ENCODE measurements at regions of chr16 and their contacts with region 1.

Region 1: DNA sequence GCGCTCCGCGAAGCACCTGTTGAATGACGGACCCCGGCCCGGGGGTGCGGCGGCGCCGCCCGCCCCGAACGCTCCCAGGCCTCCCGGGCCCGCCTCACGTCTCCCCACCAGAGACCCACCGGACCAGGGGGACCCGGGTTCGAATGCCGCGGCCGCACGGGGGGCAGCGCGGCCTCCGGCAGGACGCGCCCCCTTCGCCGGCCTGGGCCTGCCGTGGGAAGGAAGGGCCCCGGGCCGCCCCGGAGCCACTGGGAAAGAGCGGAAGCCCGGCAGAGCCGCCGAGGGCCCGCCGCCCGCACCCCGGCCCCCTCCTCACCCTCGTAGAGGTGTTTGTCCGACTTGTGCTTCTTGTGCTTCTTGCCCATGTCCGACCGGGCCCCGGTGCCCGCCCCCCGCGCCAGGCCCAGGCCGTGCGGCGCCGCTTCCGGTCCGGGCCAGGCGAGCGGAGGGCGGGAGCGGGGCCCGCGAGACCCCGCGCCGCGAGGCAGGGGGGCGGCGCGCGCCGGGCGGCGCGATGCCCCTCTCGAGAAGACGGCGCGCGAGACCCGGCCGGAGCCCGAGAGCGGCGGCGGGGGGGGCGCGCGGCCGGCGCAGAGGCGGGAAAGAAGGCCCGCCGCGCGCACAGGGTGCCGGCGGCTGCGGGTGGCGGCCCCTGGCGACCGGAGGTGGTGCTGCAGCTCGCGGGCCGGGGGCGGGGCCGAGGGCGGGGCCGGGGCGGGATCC is at the start of gene BRD7:
- DNase-seq: no peak
- H3K4me3 ChIP-seq: peak within 1 kb of the TSS; percentile 80 to 100 (median 92)
- H3K27ac ChIP-seq: peak within 1 kb of the TSS; percentile 78 to 85 (median 81)
- H3K4me1 ChIP-seq: peaks cover 0 to 61% (median 40%) of the 10 kb centered on the region in 4 donors
- H3K27me3 ChIP-seq: no peaks in the 10 kb centered on the region
- CTCF ChIP-seq: peak in 1 of 4 experiments; percentile 64
- EP300 ChIP-seq: no peak
- POLR2A ChIP-seq: no peak
- total RNA-seq, gene BRD7: 52.0 to 56.4 (median 53.7) TPM

Region 2: DNA sequence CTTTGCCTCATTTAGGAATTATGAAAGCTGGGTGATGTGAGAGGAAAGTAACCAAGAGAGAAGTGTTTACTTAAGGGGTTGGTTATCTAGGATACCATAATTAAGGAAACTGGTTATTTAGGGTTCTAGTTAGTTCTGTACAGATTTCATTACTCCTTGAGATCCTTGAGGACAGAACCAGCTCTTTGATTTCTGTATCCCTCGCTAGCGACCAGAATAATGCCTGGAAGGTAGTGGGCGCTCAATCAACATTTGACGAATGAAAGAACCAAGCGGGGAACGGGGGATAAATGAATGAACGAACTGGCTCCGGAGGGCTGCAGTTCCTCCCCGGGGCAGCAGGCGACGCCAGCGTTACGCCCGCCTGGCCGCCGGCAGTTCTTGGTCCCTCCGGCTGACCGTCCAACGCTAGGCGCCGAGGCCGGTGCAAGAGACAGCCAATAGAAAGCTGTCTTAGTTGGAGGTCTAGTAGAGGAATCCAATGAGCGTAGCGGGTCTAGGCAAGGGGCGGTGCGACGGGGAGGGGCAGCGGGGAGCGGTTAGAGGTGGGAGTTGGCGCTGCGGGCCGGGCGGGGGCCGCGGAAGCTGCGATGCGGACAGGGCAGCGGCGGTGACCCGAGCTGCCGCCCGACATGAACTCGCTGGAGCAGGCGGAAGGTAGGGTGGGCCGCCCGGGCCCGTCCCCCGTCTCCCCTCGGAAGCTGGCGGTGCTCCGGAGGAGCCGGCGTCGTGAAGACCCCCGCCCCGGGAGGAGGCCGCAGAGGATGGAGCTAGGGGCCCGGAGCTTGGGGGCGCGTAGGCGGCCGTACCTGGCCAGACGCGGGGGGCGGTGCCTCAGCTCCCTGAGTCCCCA is 343.7 kb before region 1 on chr16 and contains the start of gene CNEP1R1:
- intact Hi-C with region 1: loop called (anchors 2 kb)
- DNase-seq: peak; percentile 98
- H3K4me3 ChIP-seq: peak within 1 kb of the TSS; percentile 89 to 100 (median 100)
- H3K27ac ChIP-seq: peak within 1 kb of the TSS; percentile 84 to 91 (median 88)
- H3K4me1 ChIP-seq: peaks cover 0 to 35% (median 21%) of the 10 kb centered on the region in 4 donors
- H3K27me3 ChIP-seq: no peaks in the 10 kb centered on the region
- CTCF ChIP-seq: peak; percentile 99 to 100 (median 100)
- EP300 ChIP-seq: peak in 1 of 4 donors; percentile 44
- POLR2A ChIP-seq: peak; percentile 38 to 53
- total RNA-seq, gene CNEP1R1: 10.2 to 18.9 (median 14.1) TPM

Region 3: DNA sequence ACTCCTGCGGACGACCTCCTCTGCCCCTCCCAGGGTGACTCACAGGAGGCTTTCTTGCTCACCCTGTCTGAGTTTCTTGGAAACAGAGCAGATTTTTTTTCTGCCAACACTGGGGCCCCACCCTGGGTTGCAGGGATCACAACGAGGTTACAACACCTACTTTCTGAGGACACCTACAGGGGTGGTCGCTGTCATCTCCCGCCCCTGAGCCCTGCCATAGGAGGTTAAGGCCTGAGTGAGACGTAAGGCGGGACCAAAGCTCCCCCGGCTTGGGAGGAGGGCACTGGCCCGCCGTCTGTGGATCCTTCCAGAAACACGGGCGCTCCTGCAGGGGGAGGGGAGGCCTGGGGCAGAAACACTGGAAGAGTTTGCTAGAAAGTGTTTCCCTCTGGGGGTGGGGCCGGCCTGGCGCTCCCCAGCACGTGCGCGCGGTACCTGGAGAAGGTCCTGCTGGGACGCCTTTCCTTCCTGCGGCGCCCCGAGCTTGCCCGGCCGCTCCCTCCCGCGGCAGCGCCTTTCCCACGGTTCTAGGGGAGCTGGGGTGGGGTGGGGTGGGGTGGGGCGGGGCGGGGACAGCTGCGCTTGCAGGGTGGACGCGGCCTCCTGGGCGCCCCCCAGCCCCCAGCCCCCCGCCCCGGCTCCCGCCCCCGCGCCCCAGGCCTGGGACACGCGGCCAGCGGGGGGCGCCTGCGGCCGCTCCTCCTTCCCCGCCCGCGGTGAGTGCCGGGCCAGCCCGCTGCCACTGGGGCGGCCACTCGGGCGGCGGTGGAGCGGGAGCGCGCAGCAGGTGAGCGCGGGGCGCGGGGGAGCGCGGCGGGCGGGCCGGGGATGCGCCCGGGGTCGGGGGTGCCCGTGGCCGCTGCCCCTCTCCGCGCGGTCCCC is 122.9 kb before region 1 on chr16:
- intact Hi-C with region 1: loop called (anchors 5 kb)
- DNase-seq: no peak
- H3K4me3 ChIP-seq: peak overlapping the region; percentile 50 to 70 (median 63)
- H3K27ac ChIP-seq: peak overlapping the region in 3 of 4 donors; percentile 31 to 41 (median 37)
- H3K4me1 ChIP-seq: peaks cover 0 to 19% (median 17%) of the 10 kb centered on the region in 4 donors
- H3K27me3 ChIP-seq: no peaks in the 10 kb centered on the region
- CTCF ChIP-seq: peak in 1 of 4 experiments; percentile 36
- EP300 ChIP-seq: no peak
- POLR2A ChIP-seq: no peak

Region 4: GRCh38 chr16:50548125-50548908 is 179.7 kb after region 1 on chr16 and contains the start of gene NKD1:
- intact Hi-C with region 1: loop called (anchors 2 kb)
- DNase-seq: peak; percentile 86
- H3K4me3 ChIP-seq: peak within 1 kb of the TSS; percentile 55 to 97 (median 78)
- H3K27ac ChIP-seq: peak within 1 kb of the TSS; percentile 74 to 87 (median 82)
- H3K4me1 ChIP-seq: peaks cover 0 to 30% (median 23%) of the 10 kb centered on the region in 4 donors
- H3K27me3 ChIP-seq: no peaks in the 10 kb centered on the region
- CTCF ChIP-seq: no peak
- EP300 ChIP-seq: no peak
- POLR2A ChIP-seq: no peak
- total RNA-seq, gene NKD1: 6.7 to 18.0 (median 11.5) TPM

Region 5: DNA sequence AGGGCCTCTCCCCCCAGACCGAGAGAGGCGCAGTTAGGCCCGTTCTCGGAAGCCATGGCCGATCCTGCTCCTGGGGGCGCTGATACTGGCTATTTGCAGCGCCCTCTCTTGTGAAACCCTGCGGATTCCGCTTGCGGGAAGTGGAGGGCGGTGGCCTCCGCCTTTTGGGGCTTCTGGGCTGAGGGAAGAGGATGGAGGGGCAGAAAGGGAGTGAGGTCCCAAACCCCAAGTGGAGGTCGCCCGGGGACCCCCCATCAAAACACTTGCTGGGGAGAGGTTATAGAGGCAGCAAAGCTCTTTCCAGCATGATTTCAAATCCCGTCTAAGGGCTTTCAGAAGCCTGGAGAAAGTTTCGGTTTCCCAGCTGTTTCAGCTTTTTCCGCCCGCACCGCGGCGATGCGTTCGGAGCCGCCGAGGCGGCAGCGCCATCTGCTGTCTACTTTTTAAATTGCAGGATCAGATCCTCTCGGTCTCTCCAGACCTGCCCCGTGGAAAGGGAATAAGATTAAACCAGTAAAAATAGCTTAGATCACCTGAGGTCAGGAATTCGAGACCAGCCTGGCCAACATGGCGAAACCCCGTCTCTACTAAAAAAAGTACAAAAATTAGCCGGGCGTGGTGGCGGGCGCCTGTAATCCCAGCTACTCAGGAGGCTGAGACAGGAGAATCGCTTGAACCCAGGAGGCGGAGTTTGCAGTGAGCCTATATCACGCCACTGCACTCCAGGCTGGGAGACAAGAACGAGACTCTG is 296.7 kb after region 1 on chr16:
- intact Hi-C with region 1: loop called (anchors 2 kb)
- DNase-seq: peak; percentile 86
- H3K4me3 ChIP-seq: peak overlapping the region; percentile 38 to 54 (median 52)
- H3K27ac ChIP-seq: peak overlapping the region; percentile 68 to 76 (median 73)
- H3K4me1 ChIP-seq: peaks cover 0 to 13% (median 7%) of the 10 kb centered on the region in 4 donors
- H3K27me3 ChIP-seq: no peaks in the 10 kb centered on the region
- CTCF ChIP-seq: peak; percentile 79 to 82 (median 80)
- EP300 ChIP-seq: no peak
- POLR2A ChIP-seq: no peak

Region 6: DNA sequence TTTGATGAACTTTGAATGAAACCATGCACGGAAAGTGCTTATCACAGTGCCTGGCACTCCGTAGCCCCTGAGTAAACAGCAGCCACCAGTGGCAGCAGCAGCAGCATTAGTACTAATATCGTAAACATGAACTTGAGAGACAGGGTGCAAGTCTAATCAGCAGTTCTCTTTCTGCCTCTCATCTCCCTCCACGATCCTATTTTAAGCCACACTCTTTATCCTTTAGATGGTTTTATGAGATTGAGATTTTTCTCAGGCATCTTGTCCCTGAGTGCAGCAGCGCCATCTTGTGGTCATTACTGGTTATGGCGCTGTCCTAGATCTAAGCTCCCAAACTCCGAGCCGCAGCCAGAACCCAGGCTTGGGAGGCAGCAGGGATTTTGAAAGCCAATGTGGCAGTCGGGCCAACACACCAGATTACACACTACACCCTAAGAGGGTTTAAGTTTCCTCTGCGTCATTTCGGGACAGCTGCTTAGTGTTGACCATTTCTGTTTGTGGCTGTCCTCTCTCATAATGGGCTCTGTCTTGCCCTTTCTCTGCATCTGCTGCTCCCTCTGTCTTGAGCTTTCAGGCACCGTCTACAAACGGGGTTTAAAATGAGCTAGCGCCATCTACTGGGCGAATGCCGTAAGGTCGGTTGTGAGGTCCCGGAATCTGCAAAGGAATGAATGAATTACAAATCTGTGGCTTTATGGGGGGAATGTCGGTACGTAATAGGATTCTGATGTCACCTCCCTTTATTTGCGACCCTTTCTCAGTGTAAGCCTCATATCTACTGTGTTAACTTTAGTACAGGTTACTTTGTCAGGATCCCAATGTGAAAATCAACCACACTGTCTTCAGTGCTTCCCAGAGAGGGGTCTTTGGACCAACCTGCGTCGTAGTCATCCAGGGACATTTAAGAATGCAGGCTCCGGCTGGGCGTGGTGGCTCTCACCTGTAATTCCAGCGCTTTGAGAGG is 437.8 kb after region 1 on chr16:
- intact Hi-C with region 1: loop called (anchors 5 kb)
- DNase-seq: peak; percentile 90
- H3K4me3 ChIP-seq: peak overlapping the region in 3 of 4 donors; percentile 33 to 41 (median 40)
- H3K27ac ChIP-seq: peak overlapping the region; percentile 73 to 80 (median 76)
- H3K4me1 ChIP-seq: peaks cover 0 to 18% (median 7%) of the 10 kb centered on the region in 4 donors
- H3K27me3 ChIP-seq: no peaks in the 10 kb centered on the region
- CTCF ChIP-seq: peak; percentile 83 to 96 (median 92)
- EP300 ChIP-seq: no peak
- POLR2A ChIP-seq: no peak

Measured in sigmoid colon (tissue), 7 donors.